B cell (primary cell): ENCODE measurements at regions of chr20 and their contacts with region 1.

Region 1: DNA sequence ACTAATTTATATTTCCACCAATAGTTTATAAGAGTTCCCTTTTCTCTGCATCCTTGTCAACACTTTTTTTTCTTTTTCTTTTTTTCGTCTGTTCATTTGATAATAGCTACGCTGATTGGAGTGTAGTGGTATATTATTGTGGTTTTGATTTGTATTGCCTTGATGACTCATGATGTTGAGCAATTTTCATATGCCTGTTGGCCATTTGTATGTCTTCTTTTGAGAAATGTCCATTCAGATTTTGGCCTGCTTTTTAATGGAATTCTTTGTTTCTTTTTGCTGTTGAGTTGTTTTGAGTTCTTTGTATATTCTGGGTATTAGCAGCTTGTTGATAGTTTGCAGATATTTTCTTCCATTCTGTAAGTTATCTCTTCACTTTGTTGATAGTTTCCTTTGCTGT is 773.4 kb downstream of the KIF16B start:
- DNase-seq: no peak
- ATAC-seq: no peak
- H3K4me3 ChIP-seq: no peak overlapping the region
- H3K4me3 Mint-ChIP-seq: no peak overlapping the region
- H3K27ac ChIP-seq: no peak overlapping the region
- H3K27ac Mint-ChIP-seq: no peak overlapping the region
- H3K4me1 ChIP-seq: no peaks in the 10 kb centered on the region
- H3K4me1 Mint-ChIP-seq: no peaks in the 10 kb centered on the region
- H3K27me3 ChIP-seq: no peaks in the 10 kb centered on the region
- H3K27me3 Mint-ChIP-seq: no peaks in the 10 kb centered on the region
- CTCF ChIP-seq: no peak

Region 2: GRCh38 chr20:15654208-15654645 is 145.6 kb before region 1 on chr20:
- CTCF ChIA-PET with region 1: no interaction called
- POLR2A ChIA-PET with region 1: no interaction called
- intact Hi-C with region 1: no loop called
- DNase-seq: peak; percentile 76
- ATAC-seq: peak; percentile 99
- H3K4me3 ChIP-seq: no peak overlapping the region
- H3K4me3 Mint-ChIP-seq: no peak overlapping the region
- H3K27ac ChIP-seq: no peak overlapping the region
- H3K27ac Mint-ChIP-seq: no peak overlapping the region
- H3K4me1 ChIP-seq: peaks cover 3 to 7% of the 10 kb centered on the region in 2 donors
- H3K4me1 Mint-ChIP-seq: peaks cover 6% of the 10 kb centered on the region
- H3K27me3 ChIP-seq: no peaks in the 10 kb centered on the region
- H3K27me3 Mint-ChIP-seq: no peaks in the 10 kb centered on the region
- CTCF ChIP-seq: peak; percentile 82

Region 3: GRCh38 chr20:15857173-15857784 is 57.4 kb after region 1 on chr20:
- CTCF ChIA-PET with region 1: no interaction called
- POLR2A ChIA-PET with region 1: no interaction called
- intact Hi-C with region 1: loop called (anchors 10 kb)
- DNase-seq: peak; percentile 58
- ATAC-seq: peak; percentile 73
- H3K4me3 ChIP-seq: no peak overlapping the region
- H3K4me3 Mint-ChIP-seq: peak overlapping the region; percentile 42
- H3K27ac ChIP-seq: peak overlapping the region; percentile 20 to 53
- H3K27ac Mint-ChIP-seq: peak overlapping the region; percentile 46
- H3K4me1 ChIP-seq: peaks cover 30 to 42% of the 10 kb centered on the region in 2 donors
- H3K4me1 Mint-ChIP-seq: peaks cover 62% of the 10 kb centered on the region
- H3K27me3 ChIP-seq: no peaks in the 10 kb centered on the region
- H3K27me3 Mint-ChIP-seq: no peaks in the 10 kb centered on the region
- CTCF ChIP-seq: no peak

Region 4: DNA sequence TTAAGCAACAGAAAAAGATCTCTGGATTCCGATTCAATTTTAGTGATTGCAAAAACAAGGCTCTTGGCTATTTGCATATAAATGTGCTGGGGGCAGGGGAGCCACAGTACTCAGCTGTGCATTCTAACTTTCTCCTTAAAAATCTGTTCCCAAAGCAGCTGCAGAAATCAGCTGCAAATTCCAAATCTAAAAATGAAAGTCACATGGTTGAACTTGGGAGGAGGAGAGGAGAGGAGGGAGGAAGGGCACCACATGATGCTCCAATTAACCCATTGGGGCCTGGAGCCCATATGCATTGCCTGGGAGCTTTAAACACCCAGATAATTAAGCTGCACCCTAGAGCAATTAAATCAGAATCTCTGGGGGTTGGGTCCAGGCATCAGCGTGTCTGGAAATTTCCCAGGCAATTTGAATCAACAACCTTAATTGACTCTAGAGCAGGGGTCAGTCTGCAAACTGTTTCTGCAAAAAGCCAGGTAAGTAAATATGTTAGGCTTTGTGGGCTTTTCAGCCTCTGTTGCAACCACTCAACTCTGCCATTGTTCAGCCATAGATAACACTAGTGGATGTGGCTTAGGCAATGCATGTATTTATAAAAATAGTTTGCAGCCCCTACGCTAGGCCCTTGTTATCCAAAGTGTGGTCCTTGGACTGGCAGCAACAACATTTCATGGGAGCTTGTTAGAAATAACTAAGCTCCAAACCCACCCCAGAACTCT is 265.3 kb after region 1 on chr20:
- CTCF ChIA-PET with region 1: no interaction called
- POLR2A ChIA-PET with region 1: no interaction called
- intact Hi-C with region 1: no loop called
- DNase-seq: no peak
- ATAC-seq: no peak
- H3K4me3 ChIP-seq: no peak overlapping the region
- H3K4me3 Mint-ChIP-seq: no peak overlapping the region
- H3K27ac ChIP-seq: no peak overlapping the region
- H3K27ac Mint-ChIP-seq: no peak overlapping the region
- H3K4me1 ChIP-seq: peaks cover 23 to 28% of the 10 kb centered on the region in 2 donors
- H3K4me1 Mint-ChIP-seq: peaks cover 38% of the 10 kb centered on the region
- H3K27me3 ChIP-seq: no peaks in the 10 kb centered on the region
- H3K27me3 Mint-ChIP-seq: no peaks in the 10 kb centered on the region
- CTCF ChIP-seq: no peak